Endothelial cell of umbilical vein (primary cell): ENCODE measurements at regions of chr13 and their contacts with region 1.

Region 1: DNA sequence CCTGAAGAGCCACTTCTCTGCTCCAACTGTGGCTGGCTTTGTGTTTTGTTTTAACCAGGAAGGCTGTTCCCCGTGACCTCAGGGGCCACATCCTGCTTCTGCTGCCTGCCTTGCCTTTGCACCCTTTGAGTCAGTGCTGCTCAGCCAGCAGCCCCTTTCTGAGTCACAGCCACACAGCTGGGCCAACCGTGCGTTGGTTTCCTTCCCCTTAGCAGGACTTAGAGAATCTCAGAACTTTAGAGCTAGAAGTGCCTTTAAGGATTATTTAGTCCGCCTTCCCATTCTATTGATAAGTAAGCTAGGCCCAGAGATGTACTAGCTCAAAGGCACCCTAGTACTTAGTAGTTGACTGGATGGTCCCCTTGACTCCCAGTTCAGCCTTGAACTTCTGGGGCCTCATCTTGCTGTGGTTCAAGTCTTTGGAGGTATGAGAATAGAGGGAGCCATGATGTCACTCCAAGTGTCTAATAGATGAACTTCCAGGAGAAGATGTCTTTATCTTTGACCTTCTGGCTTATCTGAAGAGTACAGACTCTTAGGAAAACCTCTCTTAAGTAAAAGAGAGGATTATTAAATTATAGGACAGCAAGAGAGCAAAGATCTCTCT is 8.0 kb downstream of the RGCC start:
- DNase-seq: peak; percentile 96
- H3K4me3 ChIP-seq: no peak overlapping the region
- H3K27ac ChIP-seq: peak overlapping the region; percentile 86
- H3K4me1 ChIP-seq: peaks cover 37% of the 10 kb centered on the region
- H3K27me3 ChIP-seq: no peaks in the 10 kb centered on the region
- CTCF ChIP-seq: no peak
- POLR2A ChIP-seq: peak; percentile 36

Region 2: DNA sequence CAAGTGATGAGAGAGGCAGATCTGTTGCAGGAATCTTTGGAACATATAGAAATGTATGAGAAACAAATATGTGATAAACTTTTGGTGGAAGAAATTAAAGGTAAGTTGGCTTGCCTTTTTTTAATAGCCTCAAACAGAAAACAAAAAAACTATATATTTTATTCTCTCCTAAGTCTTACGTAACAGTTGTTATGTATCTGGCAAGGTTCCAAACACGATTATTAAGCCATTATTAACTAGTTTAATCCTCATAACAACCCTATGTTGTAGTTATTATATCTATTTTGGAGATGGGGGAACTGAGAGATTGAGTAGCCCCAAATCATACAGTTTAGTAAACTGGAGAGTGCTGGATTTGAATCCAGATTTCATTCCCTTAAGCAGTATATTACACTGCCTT is 139.6 kb before region 1 on chr13:
- CTCF ChIA-PET with region 1: no interaction called
- POLR2A ChIA-PET with region 1: no interaction called
- dilution Hi-C with region 1: no loop called
- intact Hi-C with region 1: no loop called
- DNase-seq: no peak
- H3K4me3 ChIP-seq: no peak overlapping the region
- H3K27ac ChIP-seq: no peak overlapping the region
- H3K4me1 ChIP-seq: peaks cover 10% of the 10 kb centered on the region
- H3K27me3 ChIP-seq: no peaks in the 10 kb centered on the region
- CTCF ChIP-seq: no peak
- POLR2A ChIP-seq: no peak

Region 3: DNA sequence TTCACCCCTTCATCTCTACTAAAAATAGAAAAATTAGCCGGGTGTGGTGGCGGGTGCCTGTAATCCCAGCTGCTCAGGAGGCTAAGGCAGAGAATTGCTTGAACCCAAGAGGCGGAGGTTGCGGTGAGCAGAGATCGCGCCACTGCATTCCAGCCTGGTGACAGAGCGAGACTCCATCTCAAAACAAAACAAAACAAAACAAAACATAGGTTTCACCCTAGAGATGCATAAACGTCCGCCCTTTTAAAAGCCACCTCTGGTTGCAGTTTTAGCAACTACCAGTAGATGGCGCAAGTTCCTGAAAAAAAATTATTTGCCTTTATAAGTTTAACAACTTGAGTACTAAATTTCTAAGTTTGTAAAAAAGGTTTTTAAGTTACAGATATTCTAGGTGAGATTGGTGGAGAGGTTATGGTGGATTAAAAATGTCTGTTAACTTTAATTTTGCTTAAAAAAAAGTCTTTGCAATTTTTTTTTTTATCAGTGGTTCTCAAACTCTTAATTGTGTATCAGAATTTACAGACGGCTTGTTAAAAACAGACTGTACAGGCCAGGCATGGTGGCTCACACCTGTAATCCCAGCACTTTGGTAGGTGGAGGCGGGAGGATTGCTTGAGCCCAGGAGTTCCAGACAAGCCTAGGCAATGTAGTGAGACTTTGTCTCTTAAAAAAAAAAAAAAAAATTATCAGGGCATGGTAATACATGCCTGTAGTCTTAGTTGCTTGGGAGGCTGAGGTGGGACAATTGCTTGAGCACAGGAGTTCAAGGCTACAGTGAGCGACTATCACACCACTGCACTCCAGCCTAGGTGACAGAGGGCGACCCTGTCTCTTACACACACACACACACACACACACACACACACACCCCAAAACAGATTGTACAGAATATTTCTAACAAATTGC is 112.2 kb before region 1 on chr13:
- CTCF ChIA-PET with region 1: no interaction called
- POLR2A ChIA-PET with region 1: no interaction called
- dilution Hi-C with region 1: no loop called
- intact Hi-C with region 1: loop called (anchors 2 kb)
- DNase-seq: peak; percentile 87
- H3K4me3 ChIP-seq: no peak overlapping the region
- H3K27ac ChIP-seq: peak overlapping the region; percentile 72
- H3K4me1 ChIP-seq: peaks cover 12% of the 10 kb centered on the region
- H3K27me3 ChIP-seq: no peaks in the 10 kb centered on the region
- CTCF ChIP-seq: peak; percentile 59 to 69
- POLR2A ChIP-seq: no peak

Region 4: GRCh38 chr13:41639955-41640780 is 174.8 kb after region 1 on chr13:
- CTCF ChIA-PET with region 1: no interaction called
- POLR2A ChIA-PET with region 1: no interaction called
- dilution Hi-C with region 1: no loop called
- intact Hi-C with region 1: no loop called
- DNase-seq: peak; percentile 36
- H3K4me3 ChIP-seq: no peak overlapping the region
- H3K27ac ChIP-seq: no peak overlapping the region
- H3K4me1 ChIP-seq: peaks cover 21% of the 10 kb centered on the region
- H3K27me3 ChIP-seq: no peaks in the 10 kb centered on the region
- CTCF ChIP-seq: no peak
- POLR2A ChIP-seq: no peak

Region 5: GRCh38 chr13:41900918-41901317 is 435.6 kb after region 1 on chr13:
- CTCF ChIA-PET with region 1: no interaction called
- POLR2A ChIA-PET with region 1: no interaction called
- dilution Hi-C with region 1: no loop called
- intact Hi-C with region 1: no loop called
- DNase-seq: no peak
- H3K4me3 ChIP-seq: no peak overlapping the region
- H3K27ac ChIP-seq: no peak overlapping the region
- H3K4me1 ChIP-seq: no peaks in the 10 kb centered on the region
- H3K27me3 ChIP-seq: no peaks in the 10 kb centered on the region
- CTCF ChIP-seq: no peak
- POLR2A ChIP-seq: no peak